ENCODE measurements at regions of chr2 and their contacts with region 1.

Region 1: GRCh38 chr2:46187112-46187618 is 110.0 kb upstream of the EPAS1 start:
- DNase-seq: peak in 6 of 9 donors; percentile 9 to 44 (median 32)
- ATAC-seq: peak; percentile 38
- H3K4me3 ChIP-seq: peak overlapping the region; percentile 25
- H3K4me3 Mint-ChIP-seq: peak overlapping the region in 9 of 10 donors; percentile 42 to 76 (median 70)
- H3K27ac ChIP-seq: peak overlapping the region; percentile 32
- H3K27ac Mint-ChIP-seq: peak overlapping the region; percentile 72 to 95 (median 84)
- H3K4me1 ChIP-seq: peaks cover 4 to 5% of the 10 kb centered on the region in 2 donors
- H3K4me1 Mint-ChIP-seq: peaks cover 4 to 19% (median 14%) of the 10 kb centered on the region in 7 donors
- H3K27me3 ChIP-seq: no peaks in the 10 kb centered on the region
- H3K27me3 Mint-ChIP-seq: peaks cover 0 to 3% (median 0%) of the 10 kb centered on the region in 5 donors

Region 2: DNA sequence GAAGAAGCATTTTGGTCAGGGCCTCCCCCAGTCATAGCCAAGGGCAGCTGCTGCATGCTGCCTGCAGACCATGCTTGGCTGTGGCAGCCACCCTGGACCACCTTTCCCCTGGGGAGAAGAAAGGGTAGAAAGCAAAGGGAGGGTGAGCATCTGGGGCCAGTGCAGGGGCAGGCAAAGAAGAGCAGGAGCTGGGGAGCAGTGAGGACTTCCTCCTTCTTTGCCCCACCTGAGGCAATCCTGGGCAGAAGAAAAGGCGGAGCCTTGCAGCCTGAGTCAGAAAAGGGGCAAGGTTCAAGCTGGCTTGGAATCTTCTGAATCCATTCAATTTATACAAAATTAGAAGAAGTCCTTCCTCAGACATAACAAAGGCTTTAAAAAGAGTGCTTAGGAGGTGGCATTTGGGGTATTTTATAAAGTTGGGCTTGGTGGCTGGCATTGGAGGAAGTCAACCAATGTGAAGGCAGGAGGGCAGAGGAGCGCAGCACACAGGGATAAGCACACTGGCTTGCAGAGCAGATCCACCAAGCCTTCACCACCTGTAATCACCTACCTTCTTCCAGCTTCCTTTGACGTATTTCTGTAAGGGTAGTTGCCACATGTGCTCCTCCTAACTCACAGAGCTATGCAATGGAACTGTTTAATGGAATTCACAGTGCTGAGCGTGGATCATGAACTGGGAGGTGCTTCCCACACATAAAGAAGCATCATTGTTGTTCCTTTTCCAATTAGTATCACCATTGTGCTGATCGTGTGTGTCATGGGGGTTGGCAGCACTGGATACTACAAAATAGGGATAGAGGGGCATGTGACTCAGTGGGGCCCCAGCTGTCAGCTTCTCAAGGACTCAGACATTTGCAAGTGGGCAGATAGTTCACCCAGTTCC is 44.4 kb before region 1 on chr2:
- CTCF ChIA-PET with region 1: no interaction called
- POLR2A ChIA-PET with region 1: no interaction called
- intact Hi-C with region 1: loop called in 1 of 2 experiments (anchors 5 kb)
- DNase-seq: no peak
- ATAC-seq: no peak
- H3K4me3 ChIP-seq: no peak overlapping the region
- H3K4me3 Mint-ChIP-seq: no peak overlapping the region
- H3K27ac ChIP-seq: no peak overlapping the region
- H3K27ac Mint-ChIP-seq: peak overlapping the region in 1 of 9 donors; percentile 6
- H3K4me1 ChIP-seq: no peaks in the 10 kb centered on the region
- H3K4me1 Mint-ChIP-seq: peaks cover 0 to 30% (median 0%) of the 10 kb centered on the region in 7 donors
- H3K27me3 ChIP-seq: no peaks in the 10 kb centered on the region
- H3K27me3 Mint-ChIP-seq: peaks cover 0 to 6% (median 0%) of the 10 kb centered on the region in 5 donors

Region 3: DNA sequence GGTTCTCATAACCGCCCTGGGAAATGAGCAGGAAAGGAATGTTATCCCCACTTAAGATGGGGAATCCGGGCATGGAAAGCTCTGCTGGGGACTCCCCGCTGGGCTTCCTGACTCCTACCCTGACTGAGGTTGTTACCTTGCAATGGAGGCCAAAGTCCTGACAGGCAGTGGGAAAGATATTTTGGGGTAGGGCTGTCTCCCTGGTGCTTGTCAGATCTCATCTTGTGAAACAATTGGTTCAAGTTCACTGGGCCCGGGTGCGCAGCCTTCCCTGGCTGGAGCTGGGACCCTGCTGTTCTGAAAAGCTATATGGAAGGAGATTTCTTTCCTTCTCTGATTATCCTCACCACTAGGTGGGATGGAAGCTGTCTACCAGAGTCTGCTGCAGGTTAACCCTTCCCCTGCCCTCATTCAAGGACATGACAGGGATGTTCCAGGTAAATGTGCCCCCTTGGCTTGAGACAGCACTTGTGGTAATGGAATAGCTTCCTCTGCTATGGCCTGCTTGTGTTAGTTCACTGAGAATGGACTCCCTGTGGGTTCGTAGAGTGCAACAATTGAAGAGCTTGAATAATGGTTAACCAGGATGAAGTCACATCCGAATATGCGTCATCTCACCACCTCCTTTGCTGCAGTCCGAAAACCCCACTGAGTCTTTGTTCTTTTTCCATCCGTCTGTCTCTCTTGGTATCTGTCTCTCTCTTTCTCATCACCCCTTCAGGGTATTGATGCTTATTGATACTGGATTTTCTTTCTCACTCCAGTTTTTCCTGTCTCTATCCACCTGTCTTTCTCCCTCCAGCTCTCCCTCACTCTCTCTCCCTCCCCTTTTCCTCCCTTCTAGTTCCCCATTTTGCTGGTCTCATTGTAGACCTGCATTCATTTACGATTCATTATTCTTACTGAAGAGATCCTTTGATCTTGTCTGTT is 42.2 kb after region 1 on chr2:
- CTCF ChIA-PET with region 1: no interaction called
- POLR2A ChIA-PET with region 1: no interaction called
- intact Hi-C with region 1: loop called in 1 of 2 experiments (anchors 5 kb)
- DNase-seq: no peak
- ATAC-seq: peak; percentile 46
- H3K4me3 ChIP-seq: no peak overlapping the region
- H3K4me3 Mint-ChIP-seq: peak overlapping the region in 1 of 10 donors; percentile 58
- H3K27ac ChIP-seq: no peak overlapping the region
- H3K27ac Mint-ChIP-seq: peak overlapping the region in 3 of 9 donors; percentile 13 to 91 (median 58)
- H3K4me1 ChIP-seq: peaks cover 0 to 4% of the 10 kb centered on the region in 2 donors
- H3K4me1 Mint-ChIP-seq: peaks cover 0 to 39% (median 10%) of the 10 kb centered on the region in 7 donors
- H3K27me3 ChIP-seq: no peaks in the 10 kb centered on the region
- H3K27me3 Mint-ChIP-seq: peaks cover 0 to 24% (median 0%) of the 10 kb centered on the region in 5 donors